H1 (cell line): ENCODE measurements at regions of chrX and their contacts with region 1.

Region 1: GRCh38 chrX:10722851-10723250 is 102.5 kb upstream of the MID1 start:
- DNase-seq: peak in 1 of 2 experiments; percentile 76
- H3K4me3 ChIP-seq: no peak overlapping the region
- H3K27ac ChIP-seq: no peak overlapping the region
- H3K4me1 ChIP-seq: no peaks in the 10 kb centered on the region
- H3K27me3 ChIP-seq: no peaks in the 10 kb centered on the region
- CTCF ChIP-seq: peak in 2 of 3 experiments; percentile 54 to 59; a peak in 3 of 4 replicates
- EP300 ChIP-seq: no peak
- POLR2A ChIP-seq: no peak
- RAD21 ChIP-seq: peak; percentile 73 to 81

Region 2: DNA sequence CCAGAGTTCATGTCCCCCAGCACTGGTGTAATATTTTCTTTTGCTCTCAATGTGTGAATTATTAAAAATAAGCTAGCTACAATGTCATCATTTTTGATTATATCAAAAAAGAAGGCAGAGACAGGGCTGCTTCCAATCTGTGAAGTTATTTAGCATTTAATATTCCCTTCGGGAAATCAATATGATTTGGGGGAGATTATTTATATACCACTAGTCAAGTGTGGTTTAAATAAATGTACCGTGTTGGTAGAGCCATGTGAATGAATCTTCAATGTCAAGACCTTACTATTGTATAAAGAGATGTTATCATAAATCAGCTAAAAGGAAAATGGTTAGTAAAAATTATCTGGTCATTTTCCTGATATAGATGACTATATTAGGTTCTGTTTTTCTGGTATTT is 15.1 kb before region 1 on chrX:
- CTCF ChIA-PET with region 1: interaction called, 10 read pairs
- POLR2A ChIA-PET with region 1: no interaction called
- DNase-seq: no peak
- H3K4me3 ChIP-seq: no peak overlapping the region
- H3K27ac ChIP-seq: no peak overlapping the region
- H3K4me1 ChIP-seq: no peaks in the 10 kb centered on the region
- H3K27me3 ChIP-seq: no peaks in the 10 kb centered on the region
- CTCF ChIP-seq: no peak
- EP300 ChIP-seq: no peak
- POLR2A ChIP-seq: no peak
- RAD21 ChIP-seq: no peak

Region 3: DNA sequence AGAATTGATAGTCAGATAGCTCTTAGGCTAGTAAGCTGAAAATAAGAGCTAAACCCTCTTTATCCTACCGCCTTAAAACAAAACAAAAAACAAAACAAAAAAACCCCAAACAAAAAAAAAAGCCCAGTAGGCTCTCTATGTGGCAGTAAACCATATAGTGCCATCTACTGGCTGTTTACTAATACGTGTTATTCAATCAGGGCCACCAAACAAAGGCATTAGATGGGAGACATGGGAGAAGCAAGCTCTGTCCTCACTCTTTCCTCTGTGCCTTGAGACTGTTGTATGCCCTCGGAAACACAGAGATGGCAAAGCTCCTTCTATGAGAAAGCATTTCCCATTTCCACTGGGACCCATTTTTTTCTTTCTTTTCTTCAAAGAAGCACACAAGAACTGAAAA is 46.3 kb after region 1 on chrX:
- CTCF ChIA-PET with region 1: interaction called, 30 read pairs
- POLR2A ChIA-PET with region 1: no interaction called
- DNase-seq: no peak
- H3K4me3 ChIP-seq: peak overlapping the region in 1 of 4 experiments; percentile 30; a peak in 1 of 8 replicates
- H3K27ac ChIP-seq: no peak overlapping the region
- H3K4me1 ChIP-seq: peaks cover 0 to 3% (median 0%) of the 10 kb centered on the region in 4 experiments; a peak in 2 of 7 replicates
- H3K27me3 ChIP-seq: no peaks in the 10 kb centered on the region
- CTCF ChIP-seq: peak in 2 of 3 experiments; percentile 26 to 45; a peak in 2 of 4 replicates
- EP300 ChIP-seq: no peak
- POLR2A ChIP-seq: no peak
- RAD21 ChIP-seq: peak; percentile 51 to 60

Region 4: DNA sequence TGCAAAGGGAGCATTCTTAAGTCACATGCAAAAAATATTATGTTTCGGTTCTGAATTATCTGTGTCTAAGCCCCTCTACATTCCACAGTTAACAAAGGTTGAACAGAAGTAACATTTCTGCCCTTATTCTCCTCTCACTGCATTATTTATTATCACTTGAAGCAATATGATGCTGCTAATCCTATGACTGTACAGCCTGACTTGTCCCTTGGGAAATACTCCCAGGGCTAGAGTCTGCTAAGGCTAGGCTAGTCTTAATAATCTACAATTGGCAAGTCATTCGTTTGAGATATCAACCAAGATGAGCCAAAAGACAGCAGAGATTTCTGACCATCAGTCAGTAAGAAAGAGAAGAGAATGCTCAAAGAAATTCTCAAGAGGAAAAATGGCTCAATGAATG is 161.4 kb after region 1 on chrX:
- CTCF ChIA-PET with region 1: no interaction called
- POLR2A ChIA-PET with region 1: no interaction called
- DNase-seq: no peak
- H3K4me3 ChIP-seq: no peak overlapping the region
- H3K27ac ChIP-seq: no peak overlapping the region
- H3K4me1 ChIP-seq: no peaks in the 10 kb centered on the region
- H3K27me3 ChIP-seq: no peaks in the 10 kb centered on the region
- CTCF ChIP-seq: no peak
- EP300 ChIP-seq: no peak
- POLR2A ChIP-seq: no peak
- RAD21 ChIP-seq: no peak